ENCODE measurements at regions of chr12 and their contacts with region 1.

Region 1: GRCh38 chr12:96578526-96579125 is 89.2 kb downstream of the CFAP54 start:
- DNase-seq: peak in 4 of 35 experiments; percentile 2 to 77 (median 4)
- ATAC-seq: peak; percentile 54 to 76 (median 70)
- H3K4me3 ChIP-seq: no peak overlapping the region
- H3K4me3 Mint-ChIP-seq: no peak overlapping the region
- H3K27ac ChIP-seq: no peak overlapping the region
- H3K27ac Mint-ChIP-seq: no peak overlapping the region
- H3K4me1 ChIP-seq: no peaks in the 10 kb centered on the region
- H3K4me1 Mint-ChIP-seq: peaks cover 0 to 2% (median 0%) of the 10 kb centered on the region in 3 donors
- H3K27me3 ChIP-seq: no peaks in the 10 kb centered on the region
- H3K27me3 Mint-ChIP-seq: peaks cover 0 to 3% of the 10 kb centered on the region in 2 donors

Region 2: DNA sequence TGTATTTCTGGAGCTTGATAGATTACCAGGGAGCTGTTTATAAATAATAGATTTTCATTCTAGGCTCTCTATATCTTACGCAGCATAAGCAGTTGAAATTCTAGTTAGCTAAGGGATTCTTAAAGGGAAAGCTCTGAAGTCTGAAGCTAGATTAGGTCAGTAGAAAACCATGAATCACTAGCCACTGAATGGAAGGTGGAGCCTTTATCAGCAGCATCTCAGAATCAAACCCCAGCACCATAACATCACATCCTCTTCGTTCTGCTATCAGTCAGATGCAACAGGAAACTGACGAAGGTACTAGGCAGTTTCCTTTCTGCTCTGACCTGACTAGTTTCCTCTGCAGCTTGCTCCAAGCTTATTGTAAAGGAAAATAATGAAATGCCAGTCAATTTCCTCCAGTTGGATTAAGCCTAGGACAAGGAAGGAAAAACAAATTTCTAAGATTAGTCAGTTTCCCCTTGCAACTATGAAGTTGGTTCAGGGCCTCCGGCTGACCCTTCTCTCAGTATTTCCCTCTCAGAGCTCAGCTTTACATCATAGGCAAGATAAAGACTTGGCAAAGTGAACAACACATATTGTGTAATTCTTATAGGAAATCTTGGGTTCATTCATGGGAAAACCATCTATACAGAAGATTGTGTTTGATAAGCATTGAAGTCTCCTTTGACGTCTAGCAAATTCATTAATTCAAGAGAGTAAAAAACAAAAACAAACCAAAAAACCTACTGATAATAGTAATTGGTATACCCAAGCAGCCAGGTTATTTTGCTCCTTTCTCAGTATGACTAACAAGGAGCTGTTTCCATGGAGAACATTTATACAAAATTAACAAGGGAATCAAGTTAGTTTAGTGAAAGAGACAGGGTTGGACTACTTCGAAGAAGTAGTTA is 132.7 kb before region 1 on chr12:
- CTCF ChIA-PET with region 1: no interaction called
- POLR2A ChIA-PET with region 1: no interaction called
- DNase-seq: peak in 34 of 35 experiments; percentile 12 to 91 (median 57)
- ATAC-seq: peak; percentile 96 to 100 (median 99)
- H3K4me3 ChIP-seq: no peak overlapping the region
- H3K4me3 Mint-ChIP-seq: peak overlapping the region; percentile 32 to 63 (median 42)
- H3K27ac ChIP-seq: peak overlapping the region; percentile 97
- H3K27ac Mint-ChIP-seq: peak overlapping the region; percentile 94
- H3K4me1 ChIP-seq: peaks cover 19 to 25% of the 10 kb centered on the region in 2 experiments
- H3K4me1 Mint-ChIP-seq: peaks cover 40 to 45% (median 42%) of the 10 kb centered on the region in 3 donors
- H3K27me3 ChIP-seq: no peaks in the 10 kb centered on the region
- H3K27me3 Mint-ChIP-seq: no peaks in the 10 kb centered on the region

Region 3: GRCh38 chr12:97308576-97309198 is 730.1 kb after region 1 on chr12:
- CTCF ChIA-PET with region 1: interaction called, 5 to 52 read pairs
- POLR2A ChIA-PET with region 1: no interaction called
- DNase-seq: peak in 4 of 35 experiments; percentile 3 to 75 (median 13)
- ATAC-seq: peak in 1 of 4 experiments; percentile 32
- H3K4me3 ChIP-seq: no peak overlapping the region
- H3K4me3 Mint-ChIP-seq: no peak overlapping the region
- H3K27ac ChIP-seq: no peak overlapping the region
- H3K27ac Mint-ChIP-seq: no peak overlapping the region
- H3K4me1 ChIP-seq: no peaks in the 10 kb centered on the region
- H3K4me1 Mint-ChIP-seq: peaks cover 0 to 2% (median 0%) of the 10 kb centered on the region in 3 donors
- H3K27me3 ChIP-seq: no peaks in the 10 kb centered on the region
- H3K27me3 Mint-ChIP-seq: peaks cover 4 to 13% of the 10 kb centered on the region in 2 donors

Measured in T-cell (primary cell).